T-cell (primary cell): ENCODE measurements at regions of chr1 and their contacts with region 1.

Region 1: GRCh38 chr1:182687363-182687762 is 3.0 kb upstream of the RGS8 start:
- DNase-seq: no peak
- ATAC-seq: no peak
- H3K4me3 ChIP-seq: no peak overlapping the region
- H3K4me3 Mint-ChIP-seq: no peak overlapping the region
- H3K27ac ChIP-seq: no peak overlapping the region
- H3K27ac Mint-ChIP-seq: no peak overlapping the region
- H3K4me1 ChIP-seq: no peaks in the 10 kb centered on the region
- H3K4me1 Mint-ChIP-seq: no peaks in the 10 kb centered on the region
- H3K27me3 ChIP-seq: peaks cover 9 to 16% of the 10 kb centered on the region in 2 experiments
- H3K27me3 Mint-ChIP-seq: peaks cover 12 to 18% of the 10 kb centered on the region in 2 donors

Region 2: GRCh38 chr1:182335771-182336566 is 351.4 kb before region 1 on chr1:
- CTCF ChIA-PET with region 1: no interaction called
- POLR2A ChIA-PET with region 1: interaction called in 1 of 2 experiments, 13 read pairs
- DNase-seq: no peak
- ATAC-seq: no peak
- H3K4me3 ChIP-seq: no peak overlapping the region
- H3K4me3 Mint-ChIP-seq: no peak overlapping the region
- H3K27ac ChIP-seq: no peak overlapping the region
- H3K27ac Mint-ChIP-seq: no peak overlapping the region
- H3K4me1 ChIP-seq: no peaks in the 10 kb centered on the region
- H3K4me1 Mint-ChIP-seq: peaks cover 0 to 6% (median 0%) of the 10 kb centered on the region in 3 donors
- H3K27me3 ChIP-seq: no peaks in the 10 kb centered on the region
- H3K27me3 Mint-ChIP-seq: peaks cover 2 to 3% of the 10 kb centered on the region in 2 donors

Region 3: DNA sequence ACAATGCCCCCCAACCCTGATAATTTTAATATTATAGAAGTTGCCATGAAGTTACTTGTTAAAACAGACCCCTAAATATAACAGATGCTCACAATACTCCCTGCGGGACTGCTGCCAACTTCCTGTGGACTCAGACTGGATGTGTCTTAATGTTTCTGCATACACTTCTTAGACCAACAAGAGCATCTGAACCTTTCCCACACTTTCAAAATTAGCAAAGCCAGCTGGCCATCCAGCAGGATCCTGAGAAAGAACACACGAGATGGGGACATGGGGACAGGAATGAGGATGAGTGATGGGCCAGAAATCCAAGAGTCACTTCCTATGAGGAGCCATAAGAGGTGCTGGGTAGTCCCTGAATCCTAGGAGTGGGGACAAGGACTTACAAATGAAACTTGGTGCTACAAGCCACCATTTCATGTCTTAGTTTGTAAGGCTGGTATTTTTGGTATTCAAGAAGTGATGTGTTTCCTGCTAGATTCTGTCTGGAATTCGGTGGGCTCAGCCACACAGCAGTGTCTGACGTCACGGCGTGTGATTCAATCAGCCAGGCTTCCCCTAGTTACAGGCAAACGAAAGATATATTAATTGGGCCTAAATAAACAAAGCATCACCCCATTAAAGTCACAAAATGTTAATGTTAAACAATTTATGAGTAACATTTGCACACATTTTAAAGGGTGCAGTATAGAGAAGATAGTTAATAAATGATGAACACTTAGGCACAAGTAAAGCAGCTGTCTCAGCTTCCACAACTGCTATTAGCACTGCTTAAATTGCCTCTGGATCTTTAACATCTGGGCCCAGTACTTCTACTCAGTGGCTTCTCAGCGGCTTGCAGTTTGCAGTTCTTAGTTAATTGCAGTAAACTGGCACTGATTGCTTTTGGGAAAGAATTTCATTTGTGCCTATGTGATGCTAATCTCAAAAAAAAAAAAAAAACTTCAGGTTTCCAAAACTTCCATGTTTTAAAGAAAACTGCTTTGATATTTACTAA is 38.2 kb after region 1 on chr1:
- CTCF ChIA-PET with region 1: interaction called in 1 of 2 experiments, 10 read pairs
- POLR2A ChIA-PET with region 1: no interaction called
- DNase-seq: no peak
- ATAC-seq: no peak
- H3K4me3 ChIP-seq: no peak overlapping the region
- H3K4me3 Mint-ChIP-seq: no peak overlapping the region
- H3K27ac ChIP-seq: no peak overlapping the region
- H3K27ac Mint-ChIP-seq: no peak overlapping the region
- H3K4me1 ChIP-seq: no peaks in the 10 kb centered on the region
- H3K4me1 Mint-ChIP-seq: no peaks in the 10 kb centered on the region
- H3K27me3 ChIP-seq: peaks cover 0 to 2% of the 10 kb centered on the region in 2 experiments
- H3K27me3 Mint-ChIP-seq: peaks cover 0 to 5% of the 10 kb centered on the region in 2 donors

Region 4: GRCh38 chr1:182897696-182898095 is 210.3 kb after region 1 on chr1:
- CTCF ChIA-PET with region 1: no interaction called
- POLR2A ChIA-PET with region 1: no interaction called
- DNase-seq: no peak
- ATAC-seq: no peak
- H3K4me3 ChIP-seq: no peak overlapping the region
- H3K4me3 Mint-ChIP-seq: no peak overlapping the region
- H3K27ac ChIP-seq: no peak overlapping the region
- H3K27ac Mint-ChIP-seq: no peak overlapping the region
- H3K4me1 ChIP-seq: no peaks in the 10 kb centered on the region
- H3K4me1 Mint-ChIP-seq: no peaks in the 10 kb centered on the region
- H3K27me3 ChIP-seq: no peaks in the 10 kb centered on the region
- H3K27me3 Mint-ChIP-seq: peaks cover 3 to 5% of the 10 kb centered on the region in 2 donors